GM12878 (cell line): ENCODE measurements at regions of chr9 and their contacts with region 1.

Region 1: DNA sequence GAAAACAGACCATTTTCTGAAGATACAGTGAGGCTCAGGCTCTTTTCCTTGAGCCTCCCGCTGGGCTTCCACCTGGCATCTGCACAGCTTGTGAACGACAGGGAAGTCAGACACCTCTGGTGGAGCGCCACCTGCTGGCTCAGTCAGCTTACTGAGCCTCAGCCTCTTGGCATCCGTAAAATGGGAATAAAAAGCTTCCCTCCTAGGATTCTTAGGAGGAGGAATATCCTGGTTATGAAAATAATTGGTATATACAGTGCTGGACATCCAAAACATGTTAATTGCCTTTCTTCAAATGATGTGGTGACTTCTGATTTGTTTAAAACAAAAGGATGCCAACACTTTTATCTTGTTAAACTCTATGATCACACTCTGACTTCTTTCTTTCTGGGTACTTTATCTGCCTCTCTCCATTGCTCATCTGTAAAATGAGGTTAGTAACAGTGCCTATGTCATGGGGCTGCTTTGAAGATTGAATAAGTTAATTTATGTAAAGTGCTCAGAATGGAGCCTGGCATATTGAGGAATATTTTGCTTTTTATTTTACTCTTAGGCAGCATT is 67.5 kb downstream of the MAMDC2 start:
- DNase-seq: no peak
- ATAC-seq: peak; percentile 91
- H3K4me3 ChIP-seq: no peak overlapping the region
- H3K27ac ChIP-seq: no peak overlapping the region
- H3K4me1 ChIP-seq: no peaks in the 10 kb centered on the region
- H3K27me3 ChIP-seq: no peaks in the 10 kb centered on the region; a peak in 1 of 4 replicates
- CTCF ChIP-seq: peak; percentile 77 to 92 (median 85)
- EP300 ChIP-seq: no peak
- POLR2A ChIP-seq: no peak
- RAD21 ChIP-seq: peak; percentile 57

Region 2: DNA sequence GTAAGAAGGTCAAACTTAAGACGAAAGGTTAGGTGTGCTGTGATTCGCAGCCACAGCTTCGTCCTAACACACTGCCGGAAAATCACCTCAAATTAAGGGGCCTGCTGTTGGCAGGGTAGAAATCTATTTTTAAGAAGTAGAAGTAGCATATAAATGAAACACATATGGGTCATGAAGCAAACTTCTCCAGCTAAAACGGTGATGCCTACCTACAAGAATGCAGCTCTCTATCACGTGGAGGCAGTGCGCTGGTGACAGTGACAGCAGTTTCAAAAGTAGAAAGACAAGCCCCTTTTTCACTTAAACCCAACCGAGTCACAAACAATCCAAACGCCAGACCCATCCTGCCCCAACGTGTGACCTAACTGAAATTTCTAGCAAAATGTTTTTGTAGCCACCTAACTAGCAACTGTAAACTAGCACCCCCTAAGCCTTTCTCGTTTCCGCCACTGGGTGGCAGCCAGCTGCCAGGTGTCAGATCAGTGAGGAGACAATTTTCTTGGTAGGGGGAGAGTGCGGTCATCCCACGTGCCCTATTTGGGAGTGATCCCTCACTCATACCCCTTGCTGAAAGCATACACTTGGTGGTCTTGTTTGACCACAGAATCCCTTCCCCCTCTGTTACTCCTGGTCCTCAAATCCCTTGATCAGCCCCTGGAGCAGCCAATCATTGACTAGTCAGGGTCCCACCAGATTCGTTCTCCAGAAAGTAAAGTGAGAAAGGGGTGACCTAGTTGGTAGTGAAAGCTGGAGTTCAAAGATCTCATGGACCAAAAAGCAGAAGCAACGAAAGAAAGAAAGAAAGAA is 139.3 kb before region 1 on chr9:
- CTCF ChIA-PET with region 1: interaction called, 182 read pairs
- POLR2A ChIA-PET with region 1: no interaction called
- RAD21 ChIA-PET with region 1: interaction called, 43 read pairs
- SMC1A ChIA-PET with region 1: interaction called, 61 read pairs
- in situ Hi-C with region 1: loop called (anchors 5 kb)
- intact Hi-C with region 1: loop called (anchors 1 kb)
- DNase-seq: no peak
- ATAC-seq: peak; percentile 88
- H3K4me3 ChIP-seq: no peak overlapping the region
- H3K27ac ChIP-seq: no peak overlapping the region
- H3K4me1 ChIP-seq: no peaks in the 10 kb centered on the region
- H3K27me3 ChIP-seq: peaks cover 0 to 2% of the 10 kb centered on the region in 2 experiments; a peak in 2 of 4 replicates
- CTCF ChIP-seq: peak; percentile 82 to 89 (median 88)
- EP300 ChIP-seq: no peak
- POLR2A ChIP-seq: no peak
- RAD21 ChIP-seq: peak; percentile 85

Region 3: DNA sequence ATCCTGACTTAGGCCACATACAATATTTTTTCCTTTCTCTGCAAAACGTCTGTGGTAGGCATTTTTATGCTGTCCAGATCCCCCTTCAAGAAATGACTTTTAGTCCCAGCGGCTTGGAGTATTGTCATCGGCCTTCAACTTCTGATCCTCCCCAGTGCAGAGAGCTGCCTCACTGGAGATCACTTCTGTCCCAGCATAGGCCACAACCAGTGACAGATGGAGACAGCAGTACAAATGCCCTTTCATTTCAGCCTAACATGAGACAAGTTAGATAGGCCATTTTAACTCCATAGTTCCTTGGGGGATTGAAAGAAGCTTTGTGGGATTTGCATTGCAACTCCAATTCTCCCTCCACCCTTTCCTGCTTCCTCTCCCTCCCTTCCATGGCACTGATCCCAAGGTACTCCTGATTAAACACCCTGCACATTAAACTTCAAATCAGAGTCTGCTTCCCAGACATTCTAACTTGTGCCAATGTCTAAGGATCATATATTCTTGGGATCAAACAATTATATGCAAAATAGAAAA is 70.7 kb before region 1 on chr9:
- CTCF ChIA-PET with region 1: no interaction called
- POLR2A ChIA-PET with region 1: no interaction called
- RAD21 ChIA-PET with region 1: no interaction called
- SMC1A ChIA-PET with region 1: no interaction called
- in situ Hi-C with region 1: no loop called
- intact Hi-C with region 1: no loop called
- DNase-seq: no peak
- ATAC-seq: no peak
- H3K4me3 ChIP-seq: no peak overlapping the region
- H3K27ac ChIP-seq: no peak overlapping the region
- H3K4me1 ChIP-seq: no peaks in the 10 kb centered on the region
- H3K27me3 ChIP-seq: peaks cover 3 to 7% of the 10 kb centered on the region in 2 experiments; a peak in 3 of 4 replicates
- CTCF ChIP-seq: no peak
- EP300 ChIP-seq: no peak
- POLR2A ChIP-seq: no peak
- RAD21 ChIP-seq: no peak

Region 4: GRCh38 chr9:70085241-70085640 is 25.9 kb before region 1 on chr9:
- CTCF ChIA-PET with region 1: interaction called, 50 read pairs
- POLR2A ChIA-PET with region 1: no interaction called
- RAD21 ChIA-PET with region 1: no interaction called
- SMC1A ChIA-PET with region 1: no interaction called
- in situ Hi-C with region 1: no loop called
- intact Hi-C with region 1: no loop called
- DNase-seq: no peak
- ATAC-seq: no peak
- H3K4me3 ChIP-seq: no peak overlapping the region
- H3K27ac ChIP-seq: no peak overlapping the region
- H3K4me1 ChIP-seq: no peaks in the 10 kb centered on the region
- H3K27me3 ChIP-seq: no peaks in the 10 kb centered on the region
- CTCF ChIP-seq: no peak
- EP300 ChIP-seq: no peak
- POLR2A ChIP-seq: no peak
- RAD21 ChIP-seq: no peak

Region 5: GRCh38 chr9:70100362-70100761 is 10.8 kb before region 1 on chr9:
- CTCF ChIA-PET with region 1: interaction called, 37 read pairs
- POLR2A ChIA-PET with region 1: no interaction called
- RAD21 ChIA-PET with region 1: no interaction called
- SMC1A ChIA-PET with region 1: interaction called, 4 read pairs
- in situ Hi-C with region 1: no loop called
- intact Hi-C with region 1: no loop called
- DNase-seq: no peak
- ATAC-seq: no peak
- H3K4me3 ChIP-seq: no peak overlapping the region
- H3K27ac ChIP-seq: no peak overlapping the region
- H3K4me1 ChIP-seq: no peaks in the 10 kb centered on the region
- H3K27me3 ChIP-seq: no peaks in the 10 kb centered on the region
- CTCF ChIP-seq: no peak
- EP300 ChIP-seq: no peak
- POLR2A ChIP-seq: no peak
- RAD21 ChIP-seq: no peak